ENCODE measurements at regions of chr5 and their contacts with region 1.

Region 1: DNA sequence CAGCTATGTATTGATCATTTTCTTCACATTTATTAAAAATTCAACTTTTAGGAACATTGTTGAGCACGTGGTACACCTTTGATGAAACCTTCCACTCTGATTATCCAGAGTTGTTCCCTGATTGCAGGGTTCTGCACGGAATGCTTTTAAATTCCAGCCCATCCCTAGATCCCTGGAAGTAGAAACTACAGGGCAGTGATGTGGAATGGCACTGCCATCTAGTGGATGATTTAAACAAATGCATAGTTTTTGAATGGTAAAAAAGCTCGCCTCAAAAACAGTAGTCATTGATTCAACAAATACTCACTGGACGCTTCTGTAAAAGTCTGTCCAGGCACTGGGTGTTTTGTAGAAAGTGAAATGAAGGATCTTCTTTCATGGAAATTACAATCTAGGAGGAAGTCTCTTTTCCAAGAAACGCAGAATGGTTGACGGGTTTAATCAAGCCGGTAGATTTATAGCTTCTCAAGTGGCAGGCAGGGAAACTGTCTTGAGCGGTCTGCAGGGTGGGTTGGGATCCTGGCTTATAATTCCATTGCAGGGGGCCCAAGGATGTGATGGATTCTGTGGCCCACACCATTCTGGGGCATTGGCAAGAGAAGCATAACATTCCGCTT is 118.4 kb downstream of the ARHGAP26 start:
- DNase-seq: no peak
- ATAC-seq: peak; percentile 48

Region 2: DNA sequence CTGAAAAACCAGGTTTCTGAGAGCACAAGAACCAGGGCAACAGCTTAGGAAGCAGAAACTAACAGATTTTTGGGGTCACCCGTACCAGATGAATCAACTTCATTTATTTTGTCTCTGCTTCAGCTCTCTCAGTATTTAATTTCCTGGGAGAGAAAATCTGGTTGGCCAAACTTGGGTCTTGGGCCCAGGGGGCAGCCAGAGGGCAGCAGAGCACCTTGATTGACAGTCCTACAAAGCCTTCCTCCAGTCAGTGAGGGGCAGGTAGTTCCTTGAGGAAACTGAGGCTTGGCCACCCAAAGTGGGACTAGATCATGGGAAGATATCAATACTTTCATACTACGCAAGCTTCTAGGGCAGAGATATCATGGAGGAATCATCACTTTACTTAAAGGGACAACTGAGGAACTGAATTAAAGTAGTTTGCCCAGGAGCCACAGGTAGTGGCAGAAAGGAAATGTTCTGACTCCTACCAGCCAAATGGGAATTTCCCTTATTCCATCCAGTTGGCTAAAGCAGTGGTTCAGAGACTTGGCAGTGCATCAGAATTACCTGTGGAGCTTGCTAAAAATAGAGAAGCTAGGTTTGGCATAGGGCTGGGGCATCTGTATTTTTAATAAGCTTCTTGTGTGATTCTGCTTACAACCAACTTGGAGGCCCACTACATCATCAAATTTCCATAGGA is 139.9 kb before region 1 on chr5:
- intact Hi-C with region 1: loop called (anchors 10 kb)
- DNase-seq: peak; percentile 68
- ATAC-seq: no peak

Measured in Right ventricle myocardium inferior (tissue), 1 donor.